CD4-positive, alpha-beta T cell (primary cell): ENCODE measurements at regions of chr2 and their contacts with region 1.

Region 1: GRCh38 chr2:148020111-148021058 is at the start of gene ORC4:
- DNase-seq: peak; percentile 90 to 100 (median 97)
- ATAC-seq: peak; percentile 89
- H3K4me3 ChIP-seq: peak within 1 kb of the TSS; percentile 90
- H3K4me3 Mint-ChIP-seq: peak within 1 kb of the TSS; percentile 93
- H3K27ac ChIP-seq: peak within 1 kb of the TSS; percentile 86 to 94
- H3K27ac Mint-ChIP-seq: peak within 1 kb of the TSS; percentile 87
- H3K4me1 ChIP-seq: peaks cover 17% of the 10 kb centered on the region
- H3K4me1 Mint-ChIP-seq: peaks cover 82% of the 10 kb centered on the region
- H3K27me3 ChIP-seq: no peaks in the 10 kb centered on the region
- H3K27me3 Mint-ChIP-seq: no peaks in the 10 kb centered on the region
- CTCF ChIP-seq: no peak
- total RNA-seq, gene ORC4: 29.4 to 33.9 TPM

Region 2: GRCh38 chr2:147715807-147716206 is 304.6 kb before region 1 on chr2:
- CTCF ChIA-PET with region 1: no interaction called
- POLR2A ChIA-PET with region 1: no interaction called
- intact Hi-C with region 1: no loop called
- DNase-seq: no peak
- ATAC-seq: no peak
- H3K4me3 ChIP-seq: no peak overlapping the region
- H3K4me3 Mint-ChIP-seq: no peak overlapping the region
- H3K27ac ChIP-seq: no peak overlapping the region
- H3K27ac Mint-ChIP-seq: no peak overlapping the region
- H3K4me1 ChIP-seq: no peaks in the 10 kb centered on the region
- H3K4me1 Mint-ChIP-seq: no peaks in the 10 kb centered on the region
- H3K27me3 ChIP-seq: no peaks in the 10 kb centered on the region
- H3K27me3 Mint-ChIP-seq: no peaks in the 10 kb centered on the region
- CTCF ChIP-seq: no peak

Region 3: DNA sequence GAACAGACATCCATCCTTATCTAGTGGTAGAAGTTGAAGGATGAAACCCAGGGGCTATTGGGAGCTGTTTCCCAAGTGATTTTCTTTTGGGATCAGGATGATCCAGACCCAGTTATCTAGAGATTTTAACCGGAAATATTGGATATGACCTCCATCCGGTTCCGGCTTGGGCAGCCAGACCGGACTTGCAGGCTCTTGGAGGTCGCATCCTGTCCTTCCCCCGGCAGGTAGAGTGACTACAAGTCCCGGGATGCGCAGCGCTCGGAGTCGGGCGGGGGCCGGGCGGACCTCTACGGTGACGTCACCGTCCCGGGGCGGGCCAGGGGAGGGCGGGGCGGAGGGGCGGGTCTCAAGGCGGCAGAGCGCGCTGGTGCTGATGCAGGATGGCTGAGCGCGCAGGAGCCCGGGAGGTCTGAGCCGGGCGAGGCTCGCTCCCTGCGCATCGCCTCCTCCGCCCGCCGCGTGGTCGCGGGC is 854.5 kb after region 1 on chr2 and contains the start of gene KIF5C:
- CTCF ChIA-PET with region 1: no interaction called
- POLR2A ChIA-PET with region 1: interaction called, 5 read pairs
- intact Hi-C with region 1: loop called (anchors 2 to 10 kb)
- DNase-seq: peak; percentile 78 to 95 (median 88)
- ATAC-seq: peak; percentile 90
- H3K4me3 ChIP-seq: peak within 1 kb of the TSS; percentile 70
- H3K4me3 Mint-ChIP-seq: peak within 1 kb of the TSS; percentile 92
- H3K27ac ChIP-seq: no peak within 1 kb of the TSS
- H3K27ac Mint-ChIP-seq: no peak within 1 kb of the TSS
- H3K4me1 ChIP-seq: peaks cover 24% of the 10 kb centered on the region
- H3K4me1 Mint-ChIP-seq: peaks cover 24% of the 10 kb centered on the region
- H3K27me3 ChIP-seq: peaks cover 2 to 13% of the 10 kb centered on the region in 2 experiments
- H3K27me3 Mint-ChIP-seq: peaks cover 52% of the 10 kb centered on the region
- CTCF ChIP-seq: no peak
- total RNA-seq, gene KIF5C: 7.3 to 8.1 TPM